ENCODE measurements at regions of chr3 and their contacts with region 1.

Region 1: GRCh38 chr3:132399054-132399929 is 18.0 kb upstream of the DNAJC13 start:
- DNase-seq: peak; percentile 53
- CTCF ChIP-seq: peak; percentile 75

Region 2: GRCh38 chr3:132368962-132369361 is 30.3 kb before region 1 on chr3:
- CTCF ChIA-PET with region 1: interaction called, 45 read pairs
- POLR2A ChIA-PET with region 1: no interaction called
- DNase-seq: no peak
- CTCF ChIP-seq: no peak

Region 3: GRCh38 chr3:132448216-132448961 is 49.1 kb after region 1 on chr3:
- CTCF ChIA-PET with region 1: no interaction called
- POLR2A ChIA-PET with region 1: no interaction called
- DNase-seq: no peak
- CTCF ChIP-seq: no peak